ENCODE measurements at regions of chr12 and their contacts with region 1.

Region 1: GRCh38 chr12:121060149-121061001 is 21.3 kb upstream of the OASL start:
- DNase-seq: peak; percentile 83
- ATAC-seq: peak; percentile 98
- H3K4me3 Mint-ChIP-seq: peak overlapping the region; percentile 82
- H3K27ac Mint-ChIP-seq: peak overlapping the region; percentile 99
- H3K4me1 Mint-ChIP-seq: peaks cover 31% of the 10 kb centered on the region
- H3K27me3 Mint-ChIP-seq: peaks cover 2% of the 10 kb centered on the region

Region 2: DNA sequence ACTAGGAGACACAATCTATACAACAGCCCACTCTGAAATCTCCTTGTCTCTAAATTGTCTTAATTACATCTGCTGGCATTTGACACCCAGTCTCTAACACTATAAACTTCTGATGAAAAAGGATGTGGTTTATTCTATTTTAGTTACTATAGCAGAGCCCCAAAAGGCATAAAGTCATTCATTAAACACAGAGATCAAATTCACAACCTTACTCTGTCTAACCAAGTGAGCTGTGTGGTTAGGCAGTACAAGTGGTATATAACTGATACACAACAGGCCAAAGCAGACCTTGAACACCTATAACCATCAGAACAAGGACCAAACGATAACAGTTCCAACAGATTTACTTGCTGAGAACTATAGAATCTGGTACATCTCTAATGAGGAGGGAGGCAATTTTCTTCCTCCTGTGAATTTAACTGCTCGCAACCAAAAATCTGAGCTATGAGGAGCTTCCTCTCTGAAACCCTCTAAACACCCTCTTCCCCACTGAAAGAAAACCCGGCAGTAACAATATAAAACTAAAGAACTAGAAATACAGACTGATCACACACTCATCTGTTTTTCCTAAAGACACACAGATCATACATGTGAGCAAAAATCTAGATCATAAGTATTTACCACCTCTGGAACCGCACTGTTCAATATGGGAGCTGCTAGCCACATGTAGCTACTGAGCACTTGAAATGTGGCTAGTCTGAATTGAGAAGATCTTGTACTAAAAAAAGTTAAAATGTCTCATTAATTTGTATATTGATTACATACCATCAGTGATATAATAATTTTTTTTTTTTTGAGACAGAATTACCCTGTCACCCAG is 174.0 kb before region 1 on chr12:
- CTCF ChIA-PET with region 1: no interaction called
- POLR2A ChIA-PET with region 1: no interaction called
- DNase-seq: no peak
- ATAC-seq: peak; percentile 87
- H3K4me3 Mint-ChIP-seq: peak overlapping the region; percentile 49
- H3K27ac Mint-ChIP-seq: peak overlapping the region; percentile 85
- H3K4me1 Mint-ChIP-seq: peaks cover 46% of the 10 kb centered on the region
- H3K27me3 Mint-ChIP-seq: no peaks in the 10 kb centered on the region

Region 3: GRCh38 chr12:121005346-121005815 is 55.0 kb before region 1 on chr12:
- CTCF ChIA-PET with region 1: interaction called, 54 read pairs
- POLR2A ChIA-PET with region 1: no interaction called
- DNase-seq: peak; percentile 67
- ATAC-seq: peak; percentile 62
- H3K4me3 Mint-ChIP-seq: no peak overlapping the region
- H3K27ac Mint-ChIP-seq: peak overlapping the region; percentile 46
- H3K4me1 Mint-ChIP-seq: peaks cover 12% of the 10 kb centered on the region
- H3K27me3 Mint-ChIP-seq: no peaks in the 10 kb centered on the region

Region 4: GRCh38 chr12:121038861-121039666 is 21.3 kb before region 1 on chr12 and contains the start of gene OASL:
- CTCF ChIA-PET with region 1: interaction called, 70 read pairs
- POLR2A ChIA-PET with region 1: interaction called, 9 read pairs
- DNase-seq: peak; percentile 75
- ATAC-seq: peak; percentile 84
- H3K4me3 Mint-ChIP-seq: peak within 1 kb of the TSS; percentile 98
- H3K27ac Mint-ChIP-seq: peak within 1 kb of the TSS; percentile 98
- H3K4me1 Mint-ChIP-seq: peaks cover 50% of the 10 kb centered on the region
- H3K27me3 Mint-ChIP-seq: peaks cover 12% of the 10 kb centered on the region
- total RNA-seq, gene OASL: 29.2 to 33.5 TPM

Region 5: DNA sequence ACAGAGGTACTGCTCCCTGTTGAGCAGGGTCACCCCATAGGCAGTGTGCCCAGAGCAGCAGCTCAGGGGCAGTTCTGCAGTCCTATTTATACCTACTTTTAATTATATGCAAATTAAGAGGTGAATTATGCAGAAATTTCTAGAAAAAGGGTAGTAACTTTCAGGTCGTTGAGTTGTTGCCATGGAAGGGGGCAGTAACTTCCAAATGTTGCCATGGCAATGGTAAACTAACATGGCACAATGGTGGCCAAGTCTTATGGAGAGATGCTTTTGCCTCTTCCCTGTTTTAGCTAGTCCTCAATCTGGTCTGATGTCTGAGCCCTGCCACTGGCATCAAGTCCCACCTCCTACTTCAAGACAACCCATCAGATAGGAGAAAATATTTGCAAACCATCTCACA is 41.9 kb after region 1 on chr12:
- CTCF ChIA-PET with region 1: interaction called, 127 read pairs
- POLR2A ChIA-PET with region 1: no interaction called
- DNase-seq: no peak
- ATAC-seq: no peak
- H3K4me3 Mint-ChIP-seq: no peak overlapping the region
- H3K27ac Mint-ChIP-seq: no peak overlapping the region
- H3K4me1 Mint-ChIP-seq: no peaks in the 10 kb centered on the region
- H3K27me3 Mint-ChIP-seq: peaks cover 5% of the 10 kb centered on the region

Region 6: DNA sequence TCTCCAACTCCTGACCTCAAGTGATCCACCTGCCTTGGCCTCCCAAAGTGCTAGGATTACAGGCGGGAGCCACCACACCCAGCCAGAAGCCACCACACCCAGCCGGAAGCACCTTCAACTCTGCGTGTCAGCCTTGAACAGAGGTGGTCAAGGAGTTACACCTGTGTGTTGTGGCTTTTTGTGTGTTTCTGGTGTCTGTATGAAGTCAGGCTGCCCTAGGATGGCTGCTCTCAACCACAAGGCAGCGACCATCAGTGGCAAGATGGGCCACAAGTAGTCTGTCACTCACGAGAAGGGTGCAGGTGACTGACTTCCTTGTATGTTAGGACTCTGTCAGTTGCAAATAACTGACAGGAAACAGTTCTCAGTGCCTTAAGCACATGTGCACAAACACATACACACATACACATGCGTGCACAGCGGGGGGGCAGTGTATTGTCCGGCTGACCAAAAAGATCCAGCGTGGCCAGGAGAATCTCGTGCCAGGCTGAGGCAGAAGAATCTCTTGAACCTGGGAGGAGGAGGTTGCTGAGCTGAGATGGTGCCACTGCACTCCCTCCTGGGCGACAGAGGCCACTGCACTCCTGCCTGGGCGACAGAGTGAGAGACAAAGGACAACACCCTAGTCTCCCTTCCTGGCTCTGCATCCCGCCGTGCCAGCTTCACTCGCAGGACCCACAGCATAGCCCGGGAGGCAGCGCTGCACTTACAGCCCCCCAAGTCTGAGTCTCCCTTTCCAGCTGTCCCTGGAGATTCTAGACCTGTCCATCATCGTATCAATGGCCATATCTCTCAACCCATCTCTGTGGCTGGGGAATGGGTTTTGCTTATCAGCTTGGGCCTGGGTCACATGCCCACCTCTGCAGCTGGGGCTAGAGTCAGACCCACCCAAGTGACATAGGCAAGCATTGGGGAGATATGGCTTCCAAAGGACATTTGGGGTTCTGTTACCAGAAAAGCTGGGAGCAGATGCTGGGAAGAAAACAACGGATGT is 163.2 kb after region 1 on chr12:
- CTCF ChIA-PET with region 1: interaction called, 10 read pairs
- POLR2A ChIA-PET with region 1: no interaction called
- DNase-seq: peak; percentile 82
- ATAC-seq: peak; percentile 60
- H3K4me3 Mint-ChIP-seq: peak overlapping the region; percentile 16
- H3K27ac Mint-ChIP-seq: peak overlapping the region; percentile 94
- H3K4me1 Mint-ChIP-seq: peaks cover 66% of the 10 kb centered on the region
- H3K27me3 Mint-ChIP-seq: no peaks in the 10 kb centered on the region